Sigmoid colon (tissue), 7 donors: ENCODE measurements at regions of chr6 and their contacts with region 1.

Region 1: DNA sequence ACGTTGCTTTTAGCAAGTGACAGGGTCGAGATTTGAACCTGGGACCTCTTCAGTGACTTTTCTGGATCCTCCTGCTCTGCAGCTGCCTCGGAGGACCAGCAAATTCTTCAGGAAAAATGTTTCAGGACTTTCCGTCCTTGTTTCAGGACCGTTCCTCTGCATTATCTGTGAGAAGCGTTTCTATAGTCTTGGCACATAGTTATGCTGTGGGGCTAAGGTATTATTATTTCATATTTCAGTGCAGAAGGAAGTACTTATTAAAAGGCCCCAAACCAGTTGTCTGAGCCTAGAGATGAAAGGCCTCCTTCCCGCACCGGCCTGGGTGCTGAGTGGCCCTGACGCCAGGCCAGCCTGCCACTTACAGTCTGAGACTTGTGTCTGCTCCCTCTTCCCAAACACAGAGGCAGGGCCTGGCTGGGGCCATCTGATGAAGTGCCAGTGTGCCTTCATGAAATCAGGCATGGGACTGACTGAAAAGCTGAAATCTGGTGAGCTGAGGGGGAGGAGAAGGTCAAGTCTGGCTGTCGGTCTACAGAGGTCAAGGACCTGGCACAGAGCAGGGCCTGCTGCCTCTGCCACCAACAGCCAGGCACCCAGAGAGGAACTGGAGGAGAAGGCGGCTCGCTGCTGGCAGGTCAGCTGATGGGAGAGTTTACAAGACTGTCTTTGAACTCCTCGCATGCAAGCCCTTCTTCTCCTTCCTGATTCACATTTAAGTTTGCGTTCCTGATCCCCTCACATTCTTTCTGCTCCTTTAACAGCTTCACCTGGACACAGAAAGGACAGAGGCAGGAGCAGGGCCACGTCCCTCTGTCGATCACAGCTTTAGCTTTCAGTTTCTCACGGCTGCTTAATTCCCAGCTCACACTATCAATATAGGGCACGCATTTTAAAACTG is 8.9 kb upstream of the QKI start:
- DNase-seq: peak; percentile 86
- H3K4me3 ChIP-seq: peak overlapping the region; percentile 13 to 40 (median 36)
- H3K27ac ChIP-seq: peak overlapping the region; percentile 80 to 84 (median 82)
- H3K4me1 ChIP-seq: peaks cover 0 to 18% (median 14%) of the 10 kb centered on the region in 4 donors
- H3K27me3 ChIP-seq: no peaks in the 10 kb centered on the region
- CTCF ChIP-seq: no peak
- EP300 ChIP-seq: no peak
- POLR2A ChIP-seq: no peak

Region 2: GRCh38 chr6:163355426-163355991 is 50.2 kb before region 1 on chr6:
- intact Hi-C with region 1: loop called (anchors 5 kb)
- DNase-seq: peak; percentile 82
- H3K4me3 ChIP-seq: peak overlapping the region in 1 of 4 donors; percentile 5
- H3K27ac ChIP-seq: peak overlapping the region; percentile 59 to 66 (median 63)
- H3K4me1 ChIP-seq: peaks cover 0 to 12% (median 6%) of the 10 kb centered on the region in 4 donors
- H3K27me3 ChIP-seq: no peaks in the 10 kb centered on the region
- CTCF ChIP-seq: no peak
- EP300 ChIP-seq: no peak
- POLR2A ChIP-seq: no peak